ENCODE measurements at regions of chr10 and their contacts with region 1.

Region 1: DNA sequence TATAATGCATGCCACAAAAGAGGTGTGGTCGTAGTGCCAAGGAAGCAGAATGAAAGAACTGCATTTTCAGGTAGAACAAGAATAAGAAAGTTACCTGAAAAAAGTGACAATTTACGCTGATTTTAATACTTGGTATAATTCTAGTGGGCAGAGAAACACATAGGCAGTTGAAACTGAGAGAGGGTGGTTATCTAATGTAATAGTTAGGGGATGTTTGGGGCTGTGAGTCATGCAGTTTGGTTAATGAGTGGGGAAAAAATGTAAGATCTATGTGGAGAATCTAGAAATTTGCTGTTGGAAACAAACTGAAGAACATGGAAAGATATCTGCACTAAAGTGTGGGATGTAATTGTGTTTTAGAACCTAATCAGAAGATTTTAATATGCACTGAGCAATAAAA is 33.7 kb downstream of the ZNF37A start:
- DNase-seq: no peak
- ATAC-seq: no peak
- H3K4me3 ChIP-seq: no peak overlapping the region
- H3K4me3 Mint-ChIP-seq: no peak overlapping the region
- H3K27ac ChIP-seq: no peak overlapping the region
- H3K27ac Mint-ChIP-seq: no peak overlapping the region
- H3K4me1 ChIP-seq: no peaks in the 10 kb centered on the region
- H3K4me1 Mint-ChIP-seq: no peaks in the 10 kb centered on the region
- H3K27me3 ChIP-seq: no peaks in the 10 kb centered on the region
- H3K27me3 Mint-ChIP-seq: no peaks in the 10 kb centered on the region

Region 2: DNA sequence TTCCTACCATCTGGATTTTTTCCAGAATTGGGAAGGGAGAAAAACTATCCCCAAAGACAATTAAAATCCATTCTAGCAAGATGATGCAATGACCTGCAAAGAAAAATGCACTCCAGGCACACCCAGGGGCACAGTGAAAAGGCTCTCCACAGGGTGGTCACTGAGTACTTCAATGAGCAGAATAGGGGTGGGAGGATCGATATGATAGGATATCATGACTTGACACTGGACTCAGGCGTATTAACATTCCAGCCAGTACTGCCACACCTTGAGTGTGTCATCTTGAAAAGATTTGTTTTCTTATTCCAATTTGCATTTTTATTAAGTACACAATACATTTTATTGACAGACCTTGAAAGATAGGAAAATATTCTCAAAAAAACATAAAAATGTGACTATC is 98.6 kb after region 1 on chr10:
- CTCF ChIA-PET with region 1: no interaction called
- POLR2A ChIA-PET with region 1: no interaction called
- intact Hi-C with region 1: loop called in 1 of 2 experiments (anchors 2 kb)
- DNase-seq: no peak
- ATAC-seq: no peak
- H3K4me3 ChIP-seq: no peak overlapping the region
- H3K4me3 Mint-ChIP-seq: no peak overlapping the region
- H3K27ac ChIP-seq: no peak overlapping the region
- H3K27ac Mint-ChIP-seq: no peak overlapping the region
- H3K4me1 ChIP-seq: no peaks in the 10 kb centered on the region
- H3K4me1 Mint-ChIP-seq: no peaks in the 10 kb centered on the region
- H3K27me3 ChIP-seq: no peaks in the 10 kb centered on the region
- H3K27me3 Mint-ChIP-seq: no peaks in the 10 kb centered on the region